Panc1 (cell line): ENCODE measurements at regions of chr6 and their contacts with region 1.

Region 1: DNA sequence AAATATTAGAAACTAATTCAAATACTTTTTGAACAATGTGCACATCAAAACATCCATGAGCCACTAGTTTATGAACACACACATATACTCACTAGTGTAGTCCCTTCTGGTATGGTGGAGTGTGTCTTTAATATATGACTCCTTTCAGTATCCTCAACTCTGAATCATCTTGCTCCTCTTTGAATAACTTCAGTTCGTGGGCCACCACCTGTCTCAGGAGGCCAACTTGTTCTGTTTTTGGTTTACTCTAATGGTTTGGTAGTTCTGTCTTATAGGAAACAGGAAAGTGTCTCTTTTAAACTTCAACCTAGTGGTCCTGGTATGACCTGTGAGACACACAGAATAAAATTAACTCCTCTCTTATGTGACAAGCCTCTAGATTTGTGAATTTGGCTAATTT is 55.6 kb downstream of the ZNF292 start:
- DNase-seq: no peak
- ATAC-seq: no peak
- H3K4me3 ChIP-seq: no peak overlapping the region
- H3K27ac ChIP-seq: no peak overlapping the region
- H3K4me1 ChIP-seq: peaks cover 33% of the 10 kb centered on the region
- H3K27me3 ChIP-seq: no peaks in the 10 kb centered on the region
- CTCF ChIP-seq: no peak

Region 2: GRCh38 chr6:87078983-87079616 is 131.9 kb before region 1 on chr6:
- CTCF ChIA-PET with region 1: no interaction called
- POLR2A ChIA-PET with region 1: no interaction called
- in situ Hi-C with region 1: no loop called
- intact Hi-C with region 1: no loop called
- DNase-seq: peak; percentile 42
- ATAC-seq: peak; percentile 98
- H3K4me3 ChIP-seq: no peak overlapping the region
- H3K27ac ChIP-seq: no peak overlapping the region
- H3K4me1 ChIP-seq: no peaks in the 10 kb centered on the region
- H3K27me3 ChIP-seq: peaks cover 6% of the 10 kb centered on the region; the same call in 1 of the 2 replicates
- CTCF ChIP-seq: peak; percentile 97

Region 3: GRCh38 chr6:87197547-87197946 is 13.4 kb before region 1 on chr6:
- CTCF ChIA-PET with region 1: no interaction called
- POLR2A ChIA-PET with region 1: interaction called, 17 read pairs
- in situ Hi-C with region 1: no loop called
- intact Hi-C with region 1: no loop called
- DNase-seq: no peak
- ATAC-seq: no peak
- H3K4me3 ChIP-seq: no peak overlapping the region
- H3K27ac ChIP-seq: no peak overlapping the region
- H3K4me1 ChIP-seq: no peaks in the 10 kb centered on the region
- H3K27me3 ChIP-seq: no peaks in the 10 kb centered on the region
- CTCF ChIP-seq: no peak

Region 4: DNA sequence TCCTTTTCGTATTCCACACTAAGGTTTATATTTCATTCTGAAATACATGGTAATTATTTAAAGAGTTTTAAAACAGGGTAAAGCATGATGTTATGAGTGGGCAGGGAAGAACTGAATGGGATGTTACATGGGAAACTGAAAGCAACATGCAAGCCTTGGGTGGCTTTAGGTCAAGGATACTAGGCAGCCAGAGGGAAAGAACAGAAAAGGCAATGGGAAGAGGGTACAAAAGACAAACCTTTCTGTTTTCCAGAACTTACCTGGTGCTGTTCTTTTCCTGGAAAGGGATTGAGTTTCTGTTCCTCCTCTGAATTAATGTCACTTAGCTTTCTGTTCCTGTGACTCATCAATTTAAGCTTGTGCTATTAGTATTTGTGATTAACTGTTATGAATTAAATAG is 40.2 kb after region 1 on chr6:
- CTCF ChIA-PET with region 1: no interaction called
- POLR2A ChIA-PET with region 1: no interaction called
- in situ Hi-C with region 1: no loop called
- intact Hi-C with region 1: no loop called
- DNase-seq: no peak
- ATAC-seq: no peak
- H3K4me3 ChIP-seq: no peak overlapping the region
- H3K27ac ChIP-seq: no peak overlapping the region
- H3K4me1 ChIP-seq: no peaks in the 10 kb centered on the region
- H3K27me3 ChIP-seq: no peaks in the 10 kb centered on the region
- CTCF ChIP-seq: no peak

Region 5: GRCh38 chr6:87322304-87323212 is 111.6 kb after region 1 on chr6 and contains the start of gene SMIM8:
- CTCF ChIA-PET with region 1: no interaction called
- POLR2A ChIA-PET with region 1: no interaction called
- in situ Hi-C with region 1: no loop called
- intact Hi-C with region 1: no loop called
- DNase-seq: peak; percentile 36
- ATAC-seq: peak; percentile 100
- H3K4me3 ChIP-seq: peak within 1 kb of the TSS; percentile 86 to 100
- H3K27ac ChIP-seq: peak within 1 kb of the TSS; percentile 88
- H3K4me1 ChIP-seq: no peaks in the 10 kb centered on the region
- H3K27me3 ChIP-seq: no peaks in the 10 kb centered on the region
- CTCF ChIP-seq: peak; percentile 100
- total RNA-seq, gene SMIM8: 6.7 TPM

Region 6: GRCh38 chr6:87341899-87342298 is 130.9 kb after region 1 on chr6:
- CTCF ChIA-PET with region 1: no interaction called
- POLR2A ChIA-PET with region 1: no interaction called
- in situ Hi-C with region 1: no loop called
- intact Hi-C with region 1: no loop called
- DNase-seq: no peak
- ATAC-seq: no peak
- H3K4me3 ChIP-seq: no peak overlapping the region
- H3K27ac ChIP-seq: no peak overlapping the region
- H3K4me1 ChIP-seq: no peaks in the 10 kb centered on the region
- H3K27me3 ChIP-seq: no peaks in the 10 kb centered on the region
- CTCF ChIP-seq: no peak